Posterior vena cava (tissue), 2 donors: ENCODE measurements at regions of chr9 and their contacts with region 1.

Region 1: DNA sequence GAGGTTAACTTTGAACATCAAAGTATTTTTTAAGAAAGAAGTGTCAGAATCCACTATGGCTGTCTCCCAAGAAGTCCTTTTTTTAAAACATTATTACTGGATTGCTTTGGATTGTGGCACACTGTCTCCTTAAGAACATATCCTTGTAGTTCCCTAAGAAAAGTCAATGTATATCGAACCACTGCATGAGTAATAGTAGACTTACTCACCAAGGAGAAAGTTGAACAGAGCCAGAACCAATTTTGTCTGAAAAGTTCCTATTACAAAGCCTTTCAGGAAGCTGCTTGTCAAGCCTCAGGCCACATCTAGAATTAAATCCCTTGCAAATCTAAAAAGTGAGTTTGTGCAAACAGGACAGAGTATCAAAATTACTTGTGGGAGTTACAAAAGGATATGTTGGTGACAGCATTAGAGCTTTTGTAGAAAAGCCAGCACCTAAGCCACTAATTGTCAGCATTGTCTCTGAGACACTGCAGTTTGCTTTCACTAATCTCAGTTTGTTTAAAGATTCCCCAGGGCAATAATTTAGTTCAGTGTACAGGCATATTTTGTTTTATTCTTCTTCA is 195.4 kb downstream of the MPDZ start:
- DNase-seq: no peak

Region 2: GRCh38 chr9:12680341-12680740 is 403.7 kb before region 1 on chr9:
- intact Hi-C with region 1: no loop called
- DNase-seq: no peak

Region 3: DNA sequence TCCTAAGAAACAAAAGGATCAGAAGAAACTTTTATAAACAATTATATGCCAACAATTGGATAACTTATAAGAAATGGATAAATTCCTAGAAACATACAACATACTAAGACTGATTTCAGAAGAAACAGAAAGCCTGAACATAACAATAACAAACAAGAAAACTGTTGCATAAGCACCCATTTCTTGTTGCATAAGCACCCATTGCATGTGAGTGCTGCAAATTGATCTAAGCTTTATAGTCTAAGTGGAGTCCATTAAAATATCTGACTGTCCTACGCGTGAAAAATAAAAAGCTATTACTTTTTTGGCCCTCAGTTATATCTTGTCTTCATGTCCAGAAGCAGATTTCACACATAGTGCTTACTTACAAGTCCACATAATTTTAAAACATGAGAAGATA is 371.5 kb before region 1 on chr9:
- intact Hi-C with region 1: loop called in 1 of 2 experiments (anchors 5 kb)
- DNase-seq: no peak

Region 4: GRCh38 chr9:13064690-13065075 is 19.4 kb before region 1 on chr9:
- intact Hi-C with region 1: loop called in 1 of 2 experiments (anchors 1 kb)
- DNase-seq: no peak